Aorta (tissue), 5 donors: ENCODE measurements at regions of chr14 and their contacts with region 1.

Region 1: GRCh38 chr14:39174560-39175444 is at the start of gene PNN:
- DNase-seq: peak; percentile 97 to 98
- ATAC-seq: peak; percentile 97
- H3K4me3 ChIP-seq: peak within 1 kb of the TSS; percentile 66 to 78
- H3K27ac ChIP-seq: peak within 1 kb of the TSS in 1 of 2 donors; percentile 86
- H3K4me1 ChIP-seq: no peaks in the 10 kb centered on the region
- H3K27me3 ChIP-seq: no peaks in the 10 kb centered on the region
- total RNA-seq, gene PNN: 53.2 to 56.9 TPM

Region 2: DNA sequence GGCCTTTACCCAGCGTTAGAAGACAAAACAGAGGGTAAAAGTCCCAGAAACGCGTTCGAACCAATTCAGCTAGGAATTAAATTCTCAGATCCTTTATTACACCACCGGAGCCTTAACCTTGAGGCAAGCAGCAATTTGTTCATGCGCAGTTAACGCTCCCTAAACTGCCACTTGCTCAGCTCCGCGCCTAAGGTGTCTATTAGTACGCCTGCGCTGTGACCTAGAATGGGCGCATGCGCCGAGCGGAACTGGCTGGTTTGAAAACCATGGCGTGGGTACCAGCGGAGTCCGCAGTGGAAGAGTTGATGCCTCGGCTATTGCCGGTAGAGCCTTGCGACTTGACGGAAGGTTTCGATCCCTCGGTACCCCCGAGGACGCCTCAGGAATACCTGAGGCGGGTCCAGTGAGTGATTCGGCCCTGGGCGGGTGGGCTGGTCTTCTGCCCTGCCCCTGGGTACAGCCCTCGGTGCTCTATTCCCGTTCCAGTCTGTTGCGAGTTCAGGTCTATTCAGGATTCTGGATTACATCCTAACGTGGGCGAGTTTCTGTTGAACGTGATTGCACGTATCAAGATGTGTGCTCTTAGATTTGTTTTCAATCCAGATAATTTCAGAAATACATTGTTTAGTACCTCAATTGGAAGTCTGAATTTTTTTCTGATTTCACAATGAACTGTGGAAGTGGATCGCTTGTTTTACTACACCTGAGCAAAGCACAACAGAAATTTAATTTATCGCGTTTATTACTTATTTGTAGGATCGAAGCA is 60.5 kb before region 1 on chr14 and contains the start of gene GEMIN2:
- intact Hi-C with region 1: loop called in 1 of 2 experiments (anchors 5 kb)
- DNase-seq: peak; percentile 94 to 97
- ATAC-seq: peak; percentile 99
- H3K4me3 ChIP-seq: peak within 1 kb of the TSS; percentile 94
- H3K27ac ChIP-seq: peak within 1 kb of the TSS in 1 of 2 donors; percentile 69
- H3K4me1 ChIP-seq: peaks cover 0 to 3% of the 10 kb centered on the region in 2 donors
- H3K27me3 ChIP-seq: no peaks in the 10 kb centered on the region
- total RNA-seq, gene GEMIN2: 7.9 to 10.6 TPM

Region 3: DNA sequence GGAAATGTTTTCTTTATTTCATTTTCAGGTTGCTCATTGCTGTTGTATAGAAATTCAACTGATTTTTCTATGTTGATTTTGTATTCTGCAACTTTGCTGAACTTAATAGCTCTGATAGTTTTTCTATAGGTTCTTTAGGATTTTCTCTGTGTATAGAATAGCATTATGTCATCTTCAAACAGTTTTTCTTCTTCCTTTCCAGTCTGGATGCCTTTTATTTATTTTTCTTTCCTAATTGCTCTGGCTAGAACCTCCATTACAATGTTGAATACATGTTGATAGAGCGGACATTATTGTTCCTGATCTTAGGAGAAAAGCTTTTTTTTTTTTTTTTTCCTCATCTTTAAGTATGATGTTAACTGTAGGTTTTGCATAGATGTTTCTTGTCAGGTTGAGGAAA is 98.1 kb after region 1 on chr14:
- intact Hi-C with region 1: loop called in 1 of 2 experiments (anchors 5 kb)
- DNase-seq: no peak
- ATAC-seq: no peak
- H3K4me3 ChIP-seq: no peak overlapping the region
- H3K27ac ChIP-seq: no peak overlapping the region
- H3K4me1 ChIP-seq: peaks cover 0 to 2% of the 10 kb centered on the region in 2 donors
- H3K27me3 ChIP-seq: no peaks in the 10 kb centered on the region

Region 4: DNA sequence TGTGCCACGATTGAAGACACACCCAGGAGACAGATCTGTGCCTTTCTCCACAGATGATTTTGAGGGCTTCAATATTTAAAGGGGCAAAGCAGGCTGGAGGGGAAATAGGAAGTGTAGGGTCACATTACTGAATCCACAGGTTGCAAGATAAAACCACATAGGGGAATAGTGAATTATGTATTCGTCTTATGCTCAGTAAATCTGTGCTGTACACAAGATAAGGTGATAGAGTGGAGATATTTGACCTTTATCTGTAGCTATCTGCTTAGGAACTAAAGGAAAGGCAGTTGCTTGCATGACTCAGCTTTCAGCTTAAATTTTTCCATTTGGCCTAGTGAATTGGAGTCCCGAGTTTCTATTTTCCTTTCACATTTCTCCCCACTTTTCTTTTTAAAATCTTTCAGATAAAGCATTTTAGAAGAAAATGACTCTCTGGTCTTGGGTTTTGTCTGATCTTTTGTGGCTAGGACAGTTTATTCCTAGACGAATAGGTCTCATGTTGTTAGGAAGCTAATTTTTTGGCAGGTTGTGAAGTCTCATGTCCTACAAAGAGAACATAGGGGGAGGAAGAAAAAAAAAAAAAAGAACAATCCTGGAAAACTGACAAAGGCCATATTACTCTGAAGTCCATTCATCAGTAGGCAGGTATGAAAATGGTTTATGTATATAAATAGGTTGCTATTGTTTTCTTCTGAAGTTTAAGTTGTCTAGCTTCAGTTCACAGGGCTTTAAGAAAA is 202.0 kb after region 1 on chr14:
- intact Hi-C with region 1: loop called in 1 of 2 experiments (anchors 5 kb)
- DNase-seq: no peak
- ATAC-seq: peak; percentile 57
- H3K4me3 ChIP-seq: peak overlapping the region in 1 of 2 donors; percentile 26
- H3K27ac ChIP-seq: peak overlapping the region in 1 of 2 donors; percentile 87
- H3K4me1 ChIP-seq: peaks cover 0 to 2% of the 10 kb centered on the region in 2 donors
- H3K27me3 ChIP-seq: no peaks in the 10 kb centered on the region